ENCODE measurements at regions of chr19 and their contacts with region 1.

Region 1: DNA sequence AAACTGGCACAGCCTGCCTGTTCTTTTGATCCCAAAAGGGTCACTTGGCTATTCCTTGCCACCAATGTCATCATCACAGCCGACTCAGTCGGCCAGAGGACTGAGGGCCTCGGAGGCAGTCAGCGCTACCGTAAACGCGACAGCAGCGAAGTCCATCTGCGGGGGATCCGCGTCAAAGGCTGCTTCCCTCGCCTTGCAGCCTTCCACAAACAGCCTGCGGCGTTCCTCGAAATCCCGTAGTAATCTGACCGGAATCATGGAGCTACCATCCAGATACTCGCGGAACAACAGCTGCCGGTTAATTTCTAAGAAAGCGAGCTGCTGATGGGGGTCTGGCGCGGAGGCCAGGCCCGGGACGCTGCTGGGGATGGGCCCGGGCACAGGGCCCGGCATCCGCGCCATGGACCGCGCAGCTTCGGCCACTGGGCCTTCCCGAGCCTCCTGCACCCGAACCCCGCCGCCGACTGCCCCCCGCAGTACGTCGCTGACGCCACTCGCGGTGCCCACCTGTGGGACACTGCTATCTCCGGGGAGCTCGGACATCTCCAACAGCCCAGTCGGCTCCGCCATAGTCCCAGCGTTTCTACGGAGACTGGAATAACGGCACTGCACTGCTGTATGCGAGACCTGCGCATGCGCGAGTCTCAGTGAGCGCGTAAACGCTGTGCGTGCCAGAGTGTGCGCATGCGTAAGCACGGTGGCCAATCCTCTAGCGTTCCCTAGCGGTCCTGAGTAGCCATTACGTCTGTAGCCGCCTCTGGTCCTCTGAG is at the start of gene EID2B:
- DNase-seq: peak; percentile 95 to 97 (median 96)
- ATAC-seq: peak; percentile 97 to 99 (median 98)
- H3K4me3 ChIP-seq: peak within 1 kb of the TSS; percentile 92 to 99 (median 93)
- H3K27ac ChIP-seq: peak within 1 kb of the TSS; percentile 58 to 62 (median 61)
- H3K4me1 ChIP-seq: peaks cover 0 to 6% (median 3%) of the 10 kb centered on the region in 4 donors
- H3K27me3 ChIP-seq: no peaks in the 10 kb centered on the region
- CTCF ChIP-seq: peak; percentile 93 to 99 (median 96)
- POLR2A ChIP-seq: peak; percentile 40
- total RNA-seq, gene EID2B: 0.18 to 0.78 (median 0.46) TPM

Region 2: DNA sequence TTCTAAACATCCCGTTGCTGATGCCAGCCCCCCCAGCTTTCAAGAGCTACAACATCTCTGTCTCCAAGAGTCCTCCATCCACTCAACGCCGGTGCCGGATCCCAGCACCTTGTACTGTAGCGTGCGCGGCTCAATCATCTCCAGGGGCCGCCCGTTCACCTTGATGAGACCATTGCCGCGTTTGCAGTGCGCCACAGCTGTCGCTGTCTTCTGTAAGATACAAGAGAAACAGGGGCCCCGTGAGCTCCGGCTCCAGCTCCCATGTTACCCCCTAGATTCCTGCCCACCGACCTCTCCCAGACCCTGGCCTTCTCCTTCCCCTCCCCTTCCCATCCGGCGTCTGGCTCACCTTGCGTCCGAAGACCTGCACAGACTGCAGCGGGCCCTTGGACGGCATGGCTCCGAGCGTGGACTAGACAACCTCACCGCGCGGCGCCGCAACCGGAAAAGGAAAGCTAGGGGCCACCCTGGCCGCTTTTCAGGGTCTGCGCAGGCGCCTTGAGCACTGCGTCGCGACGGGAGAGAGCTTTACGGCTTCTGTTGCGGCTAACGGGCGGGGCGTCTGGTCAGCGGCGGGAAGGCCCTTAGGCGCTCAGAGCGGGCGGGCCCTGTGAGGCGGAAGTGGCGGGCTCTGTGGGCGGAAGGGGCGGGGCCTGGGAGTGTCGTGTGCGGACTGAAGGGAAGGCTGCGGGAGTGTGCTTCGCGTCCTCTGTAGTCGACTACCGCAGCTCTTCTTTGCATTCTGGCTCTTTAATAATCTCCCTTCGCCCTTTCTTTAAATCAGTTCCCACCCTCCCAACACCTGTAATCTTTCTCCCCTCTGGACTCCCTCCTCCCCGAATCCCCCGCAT is 96.7 kb before region 1 on chr19 and contains the start of gene RPS16:
- intact Hi-C with region 1: loop called in 1 of 2 experiments (anchors 10 kb)
- DNase-seq: peak; percentile 99
- ATAC-seq: peak; percentile 97 to 100 (median 98)
- H3K4me3 ChIP-seq: peak within 1 kb of the TSS; percentile 92 to 98 (median 95)
- H3K27ac ChIP-seq: peak within 1 kb of the TSS; percentile 50 to 80 (median 53)
- H3K4me1 ChIP-seq: peaks cover 0 to 17% (median 4%) of the 10 kb centered on the region in 4 donors
- H3K27me3 ChIP-seq: no peaks in the 10 kb centered on the region
- CTCF ChIP-seq: no peak
- POLR2A ChIP-seq: peak; percentile 96
- total RNA-seq, gene RPS16: 448 to 643 (median 568) TPM

Region 3: GRCh38 chr19:39474139-39474622 is 58.2 kb before region 1 on chr19:
- intact Hi-C with region 1: loop called (anchors 5 to 10 kb)
- DNase-seq: peak in 2 of 3 donors; percentile 52 to 67
- ATAC-seq: peak; percentile 52 to 68 (median 64)
- H3K4me3 ChIP-seq: no peak overlapping the region
- H3K27ac ChIP-seq: no peak overlapping the region
- H3K4me1 ChIP-seq: no peaks in the 10 kb centered on the region
- H3K27me3 ChIP-seq: no peaks in the 10 kb centered on the region
- CTCF ChIP-seq: peak; percentile 58 to 61 (median 59)
- POLR2A ChIP-seq: no peak

Region 4: DNA sequence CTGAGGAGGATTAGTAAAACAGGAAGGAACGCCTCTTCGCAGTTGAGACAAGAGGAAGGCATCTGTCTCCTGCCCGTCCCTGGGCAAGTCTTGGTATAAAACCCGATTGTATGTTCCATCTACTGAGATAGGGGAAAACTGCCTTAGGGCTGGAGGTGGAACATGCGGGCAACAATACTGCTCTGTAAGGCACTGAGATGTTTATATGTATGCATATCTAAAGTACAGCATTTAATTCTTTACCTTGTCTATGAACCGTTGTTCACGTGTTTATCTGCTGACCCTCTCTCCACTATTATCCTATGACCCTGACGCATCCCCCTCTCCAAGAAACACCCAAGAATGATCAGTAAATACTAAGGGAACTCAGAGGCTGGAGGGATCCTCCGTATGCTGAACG is 52.5 kb before region 1 on chr19:
- intact Hi-C with region 1: loop called (anchors 5 to 10 kb)
- DNase-seq: no peak
- ATAC-seq: no peak
- H3K4me3 ChIP-seq: peak overlapping the region in 2 of 3 donors; percentile 72 to 91
- H3K27ac ChIP-seq: peak overlapping the region in 2 of 3 donors; percentile 69 to 78
- H3K4me1 ChIP-seq: peaks cover 0 to 9% (median 3%) of the 10 kb centered on the region in 4 donors
- H3K27me3 ChIP-seq: no peaks in the 10 kb centered on the region
- CTCF ChIP-seq: no peak
- POLR2A ChIP-seq: no peak

Region 5: GRCh38 chr19:39576511-39576910 is 44.1 kb after region 1 on chr19:
- intact Hi-C with region 1: no loop called
- DNase-seq: no peak
- ATAC-seq: no peak
- H3K4me3 ChIP-seq: no peak overlapping the region
- H3K27ac ChIP-seq: no peak overlapping the region
- H3K4me1 ChIP-seq: no peaks in the 10 kb centered on the region
- H3K27me3 ChIP-seq: no peaks in the 10 kb centered on the region
- CTCF ChIP-seq: no peak
- POLR2A ChIP-seq: no peak

Region 6: DNA sequence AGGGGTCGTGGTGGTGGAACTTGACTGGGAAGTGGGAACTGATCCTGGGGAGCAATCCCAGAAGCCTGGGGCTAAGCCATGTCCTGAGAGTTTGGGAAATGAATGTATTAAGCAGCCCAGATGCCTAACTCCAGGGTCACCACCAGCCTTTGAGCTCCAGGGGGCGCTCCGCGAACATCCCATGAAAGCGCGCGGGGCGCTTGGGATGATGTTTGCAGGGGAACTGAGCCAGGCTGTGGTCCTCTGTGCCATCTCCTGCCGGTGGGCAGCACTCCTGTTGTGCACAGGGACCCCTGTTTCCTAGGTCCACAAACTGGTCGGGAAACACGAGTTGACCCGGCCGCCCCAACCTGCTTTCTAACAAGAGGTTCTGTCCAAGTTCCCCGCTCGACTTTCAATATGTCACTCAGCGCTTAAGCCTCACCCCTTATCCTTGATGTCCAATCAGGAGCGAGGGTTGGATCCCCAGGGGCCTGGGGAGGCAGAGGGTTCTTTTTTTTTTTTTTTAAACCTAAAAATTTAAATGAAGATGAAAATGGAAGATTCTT is 260.7 kb after region 1 on chr19:
- intact Hi-C with region 1: no loop called
- DNase-seq: peak; percentile 73 to 74 (median 74)
- ATAC-seq: peak; percentile 97 to 99 (median 98)
- H3K4me3 ChIP-seq: peak overlapping the region; percentile 27 to 53 (median 37)
- H3K27ac ChIP-seq: no peak overlapping the region
- H3K4me1 ChIP-seq: no peaks in the 10 kb centered on the region
- H3K27me3 ChIP-seq: no peaks in the 10 kb centered on the region
- CTCF ChIP-seq: peak; percentile 82 to 91 (median 89)
- POLR2A ChIP-seq: no peak